ENCODE measurements at regions of chr16 and their contacts with region 1.

Region 1: DNA sequence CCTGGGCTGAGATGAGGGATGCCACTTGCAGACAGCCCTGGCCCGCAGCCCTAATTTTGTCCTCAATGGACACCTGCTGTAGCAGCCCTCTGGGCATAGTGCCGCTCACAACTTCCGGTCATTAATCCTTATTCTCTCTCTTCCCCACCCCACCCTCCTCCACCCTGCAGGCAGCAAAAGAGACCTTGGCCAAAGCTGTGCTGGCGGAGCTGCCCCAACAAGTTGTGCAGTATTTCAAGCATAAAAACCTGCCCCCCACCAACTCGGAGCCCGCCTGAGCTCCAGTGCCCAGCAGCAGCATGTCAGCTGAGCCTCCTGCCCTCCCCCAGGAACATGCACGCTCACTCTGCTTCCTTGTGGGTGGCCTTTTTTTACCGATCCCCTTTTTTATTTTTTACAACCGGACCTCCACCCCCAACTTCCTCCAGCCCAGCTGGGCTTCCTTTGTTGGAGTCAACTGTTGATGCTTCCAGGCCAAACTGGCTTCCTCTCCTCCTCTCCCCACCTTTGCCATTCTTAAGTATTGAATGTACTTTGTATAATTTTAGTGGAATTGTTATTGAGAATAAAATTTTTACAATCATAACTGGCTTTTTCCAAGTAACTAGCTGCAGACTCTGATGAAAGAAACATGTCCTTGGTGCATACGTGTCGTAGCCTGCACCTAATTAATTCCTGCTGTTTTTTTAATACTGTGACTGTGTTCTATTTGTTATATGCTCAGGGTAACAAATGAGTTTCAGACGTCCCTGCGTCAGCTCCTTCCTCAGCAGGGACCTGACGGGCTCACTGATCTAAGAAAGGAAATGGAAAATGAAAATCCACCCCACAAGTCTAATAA is 38.2 kb downstream of the PSME3IP1 start:
- DNase-seq: peak in 16 of 42 donors; percentile 18 to 64 (median 43)

Region 2: GRCh38 chr16:56860226-56861020 is 287.2 kb before region 1 on chr16:
- intact Hi-C with region 1: no loop called
- DNase-seq: no peak

Region 3: GRCh38 chr16:57091975-57092785 is 55.4 kb before region 1 on chr16 and contains the start of gene CPNE2:
- intact Hi-C with region 1: loop called (anchors 10 kb)
- DNase-seq: peak in 41 of 42 donors; percentile 28 to 90 (median 83)

Region 4: DNA sequence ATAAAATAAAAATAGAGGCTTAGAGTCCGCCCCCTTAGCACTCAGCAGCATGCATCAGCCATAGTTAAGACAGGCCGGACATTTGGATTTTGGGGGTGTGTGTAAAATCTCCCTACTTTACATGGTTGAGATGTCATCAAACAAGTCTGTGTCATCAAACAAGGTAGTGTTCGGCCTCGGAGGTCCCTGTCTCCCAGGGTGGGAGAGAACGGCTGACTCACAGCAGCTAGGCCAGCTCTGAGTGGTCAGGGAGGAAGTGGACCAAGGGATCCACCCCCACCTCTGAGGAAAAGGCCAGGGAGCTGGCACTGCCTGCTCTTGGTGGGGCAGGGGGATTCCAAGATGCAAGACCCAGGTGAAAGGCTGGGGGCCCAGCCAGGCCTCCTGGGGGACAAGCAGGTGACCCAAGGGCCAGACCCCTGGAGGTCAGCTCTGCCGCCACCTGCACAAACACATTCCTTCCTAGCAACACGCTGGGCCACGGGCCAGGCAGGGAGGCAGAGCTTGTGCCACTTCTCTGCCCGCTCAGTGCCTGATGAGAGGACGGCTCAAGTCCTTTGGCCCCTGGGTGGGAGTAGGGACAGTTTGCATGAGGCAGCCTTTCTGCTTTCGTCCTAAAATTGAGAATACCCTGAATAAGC is 626.2 kb after region 1 on chr16:
- intact Hi-C with region 1: no loop called
- DNase-seq: no peak

Measured in head of caudate nucleus (tissue), 42 donors.